RWPE1 (cell line): ENCODE measurements at regions of chr5 and their contacts with region 1.

Region 1: DNA sequence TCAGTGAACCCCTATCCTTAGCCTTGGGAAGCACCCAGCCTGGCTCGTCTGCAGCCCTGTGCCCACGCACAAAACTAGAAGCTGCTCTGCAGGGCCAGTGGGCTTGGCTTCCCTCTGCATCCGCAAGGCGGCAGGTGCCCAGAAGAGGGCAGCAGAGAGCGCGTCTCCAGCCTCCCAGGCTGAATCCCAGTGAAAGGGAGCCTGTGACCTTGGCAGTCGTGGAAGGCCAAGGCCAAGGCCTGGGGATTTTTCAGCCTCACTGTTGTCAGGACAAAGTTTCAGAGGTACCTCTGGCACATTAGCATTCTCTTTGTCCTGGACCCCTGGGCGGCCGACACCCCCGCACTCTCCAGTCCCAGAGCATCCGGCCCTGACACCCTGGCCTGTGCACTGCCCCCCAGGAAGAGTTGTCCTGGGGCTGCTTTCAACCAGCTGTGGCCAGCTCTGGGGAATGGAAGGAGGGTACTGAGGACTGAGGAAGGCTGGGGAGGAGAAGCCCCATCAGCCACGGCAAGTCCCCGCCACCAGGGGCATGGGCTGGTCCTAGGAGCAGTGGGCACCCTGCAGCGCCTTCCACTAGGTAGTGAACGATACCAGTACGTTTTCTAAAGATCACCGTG is 63.6 kb upstream of the IL17B start:
- DNase-seq: peak; percentile 86
- H3K27ac ChIP-seq: peak overlapping the region; percentile 98
- CTCF ChIP-seq: peak; percentile 99

Region 2: GRCh38 chr5:149358866-149359495 is 83.7 kb before region 1 on chr5:
- CTCF ChIA-PET with region 1: no interaction called
- POLR2A ChIA-PET with region 1: no interaction called
- DNase-seq: no peak
- H3K27ac ChIP-seq: no peak overlapping the region
- CTCF ChIP-seq: no peak

Region 3: DNA sequence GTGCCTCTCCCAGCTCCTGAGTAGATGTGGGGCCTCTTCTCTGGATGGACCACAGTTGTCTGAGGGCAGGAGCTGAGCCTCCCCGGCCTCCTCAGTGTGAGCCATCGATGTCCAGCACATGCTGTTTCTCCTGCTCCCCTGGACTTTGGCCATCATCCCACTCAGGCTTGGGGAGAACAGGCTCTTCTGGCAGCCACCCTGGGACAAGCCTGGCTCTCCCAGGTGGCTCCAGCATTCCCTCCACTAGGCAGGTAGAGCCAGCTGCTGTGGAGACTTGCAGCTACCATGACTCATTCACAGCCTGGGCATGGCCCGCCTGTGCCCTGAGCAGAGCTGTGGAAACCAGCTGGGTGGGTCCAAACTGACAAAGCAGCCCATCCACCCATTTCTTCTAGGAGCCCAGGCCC is 31.5 kb after region 1 on chr5:
- CTCF ChIA-PET with region 1: interaction called, 24 read pairs
- POLR2A ChIA-PET with region 1: no interaction called
- DNase-seq: peak; percentile 87
- H3K27ac ChIP-seq: peak overlapping the region; percentile 89
- CTCF ChIP-seq: no peak

Region 4: GRCh38 chr5:149481485-149481884 is 38.8 kb after region 1 on chr5:
- CTCF ChIA-PET with region 1: interaction called, 24 read pairs
- POLR2A ChIA-PET with region 1: no interaction called
- DNase-seq: no peak
- H3K27ac ChIP-seq: no peak overlapping the region
- CTCF ChIP-seq: no peak